A549 (cell line): ENCODE measurements at regions of chr9 and their contacts with region 1.

Region 1: DNA sequence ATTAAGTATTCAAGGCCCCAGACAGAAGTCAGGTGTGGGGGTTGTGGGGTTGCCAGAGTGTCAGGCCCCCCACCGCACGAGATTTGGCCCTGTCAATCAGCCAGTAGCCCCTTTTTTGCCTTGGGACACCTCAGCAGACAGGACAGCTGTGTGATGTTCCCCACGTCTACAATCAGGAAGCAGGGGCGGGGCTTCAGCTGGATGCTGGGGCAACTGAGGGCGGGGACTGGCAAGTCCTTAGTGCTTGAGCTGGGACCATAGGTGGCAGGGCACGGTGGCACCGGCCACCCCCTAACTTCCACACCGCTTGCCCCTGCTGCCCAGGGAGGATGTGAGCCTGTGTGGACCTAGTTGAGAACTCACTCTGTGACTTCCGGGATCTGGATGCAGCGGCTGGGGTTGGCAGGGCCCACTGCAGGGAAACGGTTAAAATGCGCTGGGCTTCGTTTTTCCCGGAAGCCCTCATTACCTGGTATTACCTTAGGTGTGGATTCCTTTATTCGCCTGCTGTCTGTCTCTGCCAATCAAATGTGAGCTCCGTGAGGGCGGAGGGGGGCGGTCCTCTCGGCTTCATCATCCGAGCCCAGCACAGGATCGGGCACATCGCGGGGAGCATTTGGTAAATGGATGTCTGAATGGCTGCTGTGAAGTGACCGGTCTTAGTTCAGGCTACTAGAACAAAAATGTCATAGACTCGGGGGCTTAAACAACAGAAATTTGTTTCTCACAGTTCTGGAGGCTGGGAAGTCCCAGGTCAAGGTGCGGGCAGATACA is 7.5 kb upstream of the GTF3C5 start:
- DNase-seq: peak in 1 of 2 experiments; percentile 22
- ATAC-seq: peak in 1 of 2 experiments; percentile 30; a peak in 3 of 6 replicates
- H3K4me3 ChIP-seq: no peak overlapping the region
- H3K27ac ChIP-seq: no peak overlapping the region
- H3K4me1 ChIP-seq: no peaks in the 10 kb centered on the region
- CTCF ChIP-seq: no peak
- EP300 ChIP-seq: no peak
- POLR2A ChIP-seq: no peak
- RAD21 ChIP-seq: no peak

Region 2: DNA sequence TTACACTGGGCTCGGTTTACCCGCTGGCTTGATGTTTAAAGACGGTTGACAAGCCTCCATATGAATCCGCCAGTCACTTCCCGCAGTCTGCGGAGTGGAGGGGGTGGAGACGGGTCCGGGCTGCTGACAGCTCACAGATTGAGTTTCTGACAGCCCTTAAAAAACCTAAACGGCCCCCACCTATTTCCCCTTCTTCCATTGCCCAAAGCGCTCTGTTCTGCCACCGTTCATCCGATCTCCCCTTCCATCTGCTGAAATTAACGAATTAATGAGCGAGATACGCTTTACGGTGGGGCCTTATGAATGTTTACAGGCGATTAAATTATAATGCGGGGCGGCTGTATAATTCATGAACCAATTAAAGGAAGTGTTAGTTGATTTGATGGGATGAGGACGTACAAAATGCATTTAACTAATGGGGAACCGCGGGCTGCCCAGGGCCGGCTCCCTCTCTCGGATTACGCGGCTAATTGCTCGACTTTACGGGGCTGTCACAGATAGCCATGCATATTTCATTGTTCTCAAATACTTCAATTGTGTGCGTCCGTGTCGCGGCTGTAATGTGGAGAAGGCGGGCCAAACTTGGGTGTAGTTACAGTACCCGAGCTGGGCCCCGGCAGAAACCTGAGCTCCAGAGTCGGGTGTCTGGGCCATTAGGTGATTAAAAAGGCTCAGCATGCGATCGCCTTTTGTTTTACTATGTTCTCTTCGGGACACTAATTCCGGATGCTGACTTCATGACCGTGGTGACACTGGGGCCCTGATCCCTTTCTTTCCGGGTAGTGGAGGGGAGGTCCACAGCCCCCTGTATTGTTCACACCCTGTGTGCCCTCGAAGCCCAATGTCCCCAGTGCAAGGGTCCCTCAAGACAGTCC is 278.2 kb before region 1 on chr9:
- CTCF ChIA-PET with region 1: no interaction called
- POLR2A ChIA-PET with region 1: no interaction called
- DNase-seq: no peak
- ATAC-seq: no peak
- H3K4me3 ChIP-seq: no peak overlapping the region
- H3K27ac ChIP-seq: no peak overlapping the region
- H3K4me1 ChIP-seq: no peaks in the 10 kb centered on the region
- CTCF ChIP-seq: no peak
- EP300 ChIP-seq: no peak
- POLR2A ChIP-seq: no peak
- RAD21 ChIP-seq: no peak

Region 3: GRCh38 chr9:132931178-132931735 is 92.0 kb before region 1 on chr9:
- CTCF ChIA-PET with region 1: no interaction called
- POLR2A ChIA-PET with region 1: no interaction called
- DNase-seq: no peak
- ATAC-seq: no peak
- H3K4me3 ChIP-seq: no peak overlapping the region
- H3K27ac ChIP-seq: no peak overlapping the region
- H3K4me1 ChIP-seq: no peaks in the 10 kb centered on the region
- CTCF ChIP-seq: no peak
- EP300 ChIP-seq: no peak
- POLR2A ChIP-seq: no peak
- RAD21 ChIP-seq: no peak

Region 4: GRCh38 chr9:132994410-132995120 is 28.7 kb before region 1 on chr9:
- CTCF ChIA-PET with region 1: interaction called, 15 read pairs
- POLR2A ChIA-PET with region 1: no interaction called
- DNase-seq: peak in 1 of 2 experiments; percentile 29
- ATAC-seq: peak in 1 of 2 experiments; percentile 29; a peak in 2 of 6 replicates
- H3K4me3 ChIP-seq: no peak overlapping the region
- H3K27ac ChIP-seq: no peak overlapping the region
- H3K4me1 ChIP-seq: no peaks in the 10 kb centered on the region
- CTCF ChIP-seq: no peak
- EP300 ChIP-seq: no peak
- POLR2A ChIP-seq: no peak
- RAD21 ChIP-seq: no peak

Region 5: DNA sequence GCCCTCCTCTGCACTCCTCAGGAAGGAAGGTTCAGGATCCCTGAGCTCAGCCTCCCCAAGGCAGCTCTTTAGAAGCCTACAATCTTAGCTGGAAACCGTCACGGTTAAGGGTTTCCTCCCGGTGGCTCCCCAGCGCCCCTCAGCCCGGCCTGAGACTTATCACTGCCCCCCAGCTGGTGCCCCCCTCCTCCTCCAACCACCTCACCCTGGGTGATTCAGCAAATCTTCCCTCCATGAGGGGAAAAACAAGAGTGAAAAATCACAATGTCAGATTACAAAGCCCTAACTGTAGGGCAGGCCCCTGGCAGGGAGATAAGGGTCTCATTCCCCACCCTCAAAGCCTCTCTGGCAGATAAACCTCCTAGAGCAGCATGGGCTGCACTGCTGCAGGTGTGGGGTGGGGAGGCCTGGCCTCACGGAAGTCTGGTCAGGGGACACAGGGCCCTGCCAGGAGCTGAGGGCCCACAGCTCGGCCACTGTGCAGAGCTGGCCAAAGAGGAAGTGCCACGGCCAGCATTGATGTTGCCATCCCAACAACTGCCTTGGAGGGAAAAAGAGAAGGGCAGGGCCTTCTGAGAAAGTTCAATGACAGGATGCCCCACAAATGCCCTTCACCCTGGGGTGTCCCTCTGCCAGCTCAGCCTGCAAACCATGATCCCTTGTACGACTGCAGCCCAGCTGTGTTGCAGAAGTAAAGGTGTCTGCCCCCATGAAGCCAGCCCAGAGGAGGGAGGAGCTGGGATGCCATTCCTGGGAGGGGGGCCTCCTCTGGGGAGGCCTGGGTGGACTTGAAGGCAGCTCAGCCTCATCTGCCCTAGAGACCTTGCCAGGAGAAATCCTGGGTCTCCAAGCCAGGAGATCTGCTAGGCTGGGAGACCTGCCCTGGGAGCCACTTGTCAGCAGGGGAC is 19.0 kb before region 1 on chr9:
- CTCF ChIA-PET with region 1: interaction called, 71 read pairs
- POLR2A ChIA-PET with region 1: no interaction called
- DNase-seq: no peak
- ATAC-seq: no peak
- H3K4me3 ChIP-seq: no peak overlapping the region
- H3K27ac ChIP-seq: no peak overlapping the region
- H3K4me1 ChIP-seq: no peaks in the 10 kb centered on the region
- CTCF ChIP-seq: no peak
- EP300 ChIP-seq: no peak
- POLR2A ChIP-seq: no peak
- RAD21 ChIP-seq: no peak

Region 6: GRCh38 chr9:133009906-133010582 is 13.3 kb before region 1 on chr9:
- CTCF ChIA-PET with region 1: interaction called, 71 read pairs
- POLR2A ChIA-PET with region 1: interaction called, 4 read pairs
- DNase-seq: no peak
- ATAC-seq: no peak
- H3K4me3 ChIP-seq: no peak overlapping the region
- H3K27ac ChIP-seq: no peak overlapping the region
- H3K4me1 ChIP-seq: no peaks in the 10 kb centered on the region
- CTCF ChIP-seq: no peak
- EP300 ChIP-seq: no peak
- POLR2A ChIP-seq: no peak
- RAD21 ChIP-seq: no peak

Region 7: DNA sequence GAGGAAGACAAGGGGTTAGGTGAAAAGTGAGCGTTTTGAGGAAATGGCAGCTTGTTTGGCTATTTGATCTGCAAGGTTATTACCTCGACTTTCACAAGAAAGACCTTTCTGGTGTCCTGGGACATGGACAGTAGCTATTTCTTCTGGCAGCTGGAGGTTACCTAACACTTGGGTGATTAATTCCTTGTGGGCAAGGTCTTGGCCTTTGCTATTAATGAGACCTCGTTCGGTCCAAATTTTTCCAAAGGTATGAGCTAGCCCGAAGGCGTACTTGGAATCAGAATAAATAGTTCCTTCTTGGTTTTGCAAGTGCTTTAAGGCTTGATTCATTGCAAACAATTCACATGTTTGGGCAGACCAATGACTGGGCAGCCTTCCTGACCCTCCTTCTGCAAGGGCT is 12.4 kb after region 1 on chr9:
- CTCF ChIA-PET with region 1: interaction called, 47 read pairs
- POLR2A ChIA-PET with region 1: interaction called, 27 read pairs
- DNase-seq: no peak
- ATAC-seq: no peak
- H3K4me3 ChIP-seq: no peak overlapping the region
- H3K27ac ChIP-seq: no peak overlapping the region
- H3K4me1 ChIP-seq: peaks cover 9% of the 10 kb centered on the region
- CTCF ChIP-seq: no peak
- EP300 ChIP-seq: no peak
- POLR2A ChIP-seq: no peak
- RAD21 ChIP-seq: no peak

Region 8: DNA sequence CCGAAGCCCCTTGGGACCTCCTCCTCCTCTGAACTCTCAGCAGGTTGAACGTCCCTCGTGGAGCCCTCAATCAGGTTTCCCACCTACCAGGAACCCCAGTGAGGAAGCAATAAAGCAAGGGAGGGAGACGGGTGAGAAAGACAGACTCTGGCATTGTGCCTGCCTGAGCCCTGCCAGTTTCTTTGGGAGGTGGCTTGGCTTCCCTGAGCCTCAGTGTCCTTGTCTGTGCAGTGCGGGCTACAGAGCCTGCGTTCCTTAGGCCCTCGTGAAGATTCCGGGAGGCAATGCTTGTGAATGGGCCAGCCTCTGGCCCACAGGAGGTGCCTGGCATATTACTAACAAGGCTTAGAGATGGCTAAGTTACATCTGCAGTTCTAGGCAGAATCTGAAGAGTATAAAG is 19.4 kb after region 1 on chr9:
- CTCF ChIA-PET with region 1: interaction called, 18 read pairs
- POLR2A ChIA-PET with region 1: no interaction called
- DNase-seq: no peak
- ATAC-seq: no peak
- H3K4me3 ChIP-seq: no peak overlapping the region
- H3K27ac ChIP-seq: no peak overlapping the region
- H3K4me1 ChIP-seq: no peaks in the 10 kb centered on the region
- CTCF ChIP-seq: no peak
- EP300 ChIP-seq: no peak
- POLR2A ChIP-seq: no peak
- RAD21 ChIP-seq: no peak

Region 9: DNA sequence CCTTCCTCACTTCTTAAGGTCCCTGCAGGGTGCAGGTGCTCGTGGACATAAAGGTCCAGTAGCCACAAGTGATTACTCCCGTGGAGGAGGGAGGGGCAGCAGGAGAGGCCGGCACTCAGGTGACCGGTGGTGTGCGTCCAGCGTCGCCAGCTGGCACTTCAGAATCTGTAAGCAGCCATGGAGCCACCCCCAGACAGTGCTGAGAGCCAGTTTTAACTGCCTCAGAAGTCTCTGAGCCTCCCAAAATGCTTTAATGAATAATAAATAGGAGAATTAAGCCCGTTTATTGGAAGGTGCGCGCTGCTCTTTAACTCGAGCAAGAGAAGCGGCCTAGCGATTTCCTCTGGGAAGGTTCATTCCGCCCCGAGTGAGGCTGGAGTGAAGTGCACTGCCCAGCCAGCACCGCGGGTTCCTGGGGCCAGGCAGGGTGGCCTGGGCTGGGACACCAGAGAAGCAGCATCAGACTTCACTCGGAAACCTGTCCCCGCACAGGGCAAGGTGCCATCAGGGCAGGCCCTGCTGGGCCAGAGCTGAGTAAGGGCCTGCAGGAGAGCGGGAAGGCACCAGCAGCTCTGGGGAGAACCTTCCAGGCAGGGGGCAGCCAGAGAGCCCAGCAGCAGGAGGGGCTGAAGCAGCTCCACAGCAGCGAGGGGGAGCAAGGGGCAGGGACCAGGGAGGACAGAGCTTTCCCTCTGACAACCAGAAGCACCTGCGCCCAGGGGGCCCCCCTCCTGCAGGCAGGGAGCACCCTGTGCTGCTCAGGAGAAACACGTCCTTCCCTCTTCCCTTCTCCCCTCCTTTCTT is 907.6 kb after region 1 on chr9:
- CTCF ChIA-PET with region 1: no interaction called
- POLR2A ChIA-PET with region 1: no interaction called
- DNase-seq: no peak
- ATAC-seq: peak in 1 of 2 experiments; percentile 11; a peak in 1 of 6 replicates
- H3K4me3 ChIP-seq: no peak overlapping the region
- H3K27ac ChIP-seq: no peak overlapping the region
- H3K4me1 ChIP-seq: peaks cover 2% of the 10 kb centered on the region; the same call in 1 of the 3 replicates
- CTCF ChIP-seq: no peak
- EP300 ChIP-seq: no peak
- POLR2A ChIP-seq: no peak
- RAD21 ChIP-seq: no peak